ENCODE measurements at regions of chr16 and their contacts with region 1.

Region 1: GRCh38 chr16:48353565-48354163 is 31.5 kb downstream of the SIAH1 start:
- DNase-seq: peak; percentile 84
- H3K4me3 ChIP-seq: no peak overlapping the region
- H3K27ac ChIP-seq: peak overlapping the region in 2 of 8 donors; percentile 24 to 27
- H3K4me1 ChIP-seq: peaks cover 0 to 24% (median 10%) of the 10 kb centered on the region in 6 donors
- H3K27me3 ChIP-seq: no peaks in the 10 kb centered on the region
- CTCF ChIP-seq: peak; percentile 72 to 95 (median 89)
- POLR2A ChIP-seq: no peak

Region 2: GRCh38 chr16:48535831-48536613 is 182.4 kb after region 1 on chr16:
- intact Hi-C with region 1: loop called (anchors 5 kb)
- DNase-seq: peak; percentile 79
- H3K4me3 ChIP-seq: no peak overlapping the region
- H3K27ac ChIP-seq: peak overlapping the region in 7 of 8 donors; percentile 36 to 71 (median 63)
- H3K4me1 ChIP-seq: peaks cover 17 to 58% (median 32%) of the 10 kb centered on the region in 6 donors
- H3K27me3 ChIP-seq: no peaks in the 10 kb centered on the region
- CTCF ChIP-seq: no peak
- POLR2A ChIP-seq: no peak

Region 3: GRCh38 chr16:48623304-48624016 is 269.8 kb after region 1 on chr16:
- intact Hi-C with region 1: loop called (anchors 5 kb)
- DNase-seq: peak; percentile 96
- H3K4me3 ChIP-seq: peak overlapping the region; percentile 16 to 69 (median 46)
- H3K27ac ChIP-seq: peak overlapping the region; percentile 60 to 94 (median 86)
- H3K4me1 ChIP-seq: peaks cover 8 to 51% (median 29%) of the 10 kb centered on the region in 6 donors
- H3K27me3 ChIP-seq: no peaks in the 10 kb centered on the region
- CTCF ChIP-seq: peak; percentile 98 to 100 (median 99)
- POLR2A ChIP-seq: no peak

Measured in spleen (tissue), 13 donors.